ENCODE measurements at regions of chr2 and their contacts with region 1.

Region 1: DNA sequence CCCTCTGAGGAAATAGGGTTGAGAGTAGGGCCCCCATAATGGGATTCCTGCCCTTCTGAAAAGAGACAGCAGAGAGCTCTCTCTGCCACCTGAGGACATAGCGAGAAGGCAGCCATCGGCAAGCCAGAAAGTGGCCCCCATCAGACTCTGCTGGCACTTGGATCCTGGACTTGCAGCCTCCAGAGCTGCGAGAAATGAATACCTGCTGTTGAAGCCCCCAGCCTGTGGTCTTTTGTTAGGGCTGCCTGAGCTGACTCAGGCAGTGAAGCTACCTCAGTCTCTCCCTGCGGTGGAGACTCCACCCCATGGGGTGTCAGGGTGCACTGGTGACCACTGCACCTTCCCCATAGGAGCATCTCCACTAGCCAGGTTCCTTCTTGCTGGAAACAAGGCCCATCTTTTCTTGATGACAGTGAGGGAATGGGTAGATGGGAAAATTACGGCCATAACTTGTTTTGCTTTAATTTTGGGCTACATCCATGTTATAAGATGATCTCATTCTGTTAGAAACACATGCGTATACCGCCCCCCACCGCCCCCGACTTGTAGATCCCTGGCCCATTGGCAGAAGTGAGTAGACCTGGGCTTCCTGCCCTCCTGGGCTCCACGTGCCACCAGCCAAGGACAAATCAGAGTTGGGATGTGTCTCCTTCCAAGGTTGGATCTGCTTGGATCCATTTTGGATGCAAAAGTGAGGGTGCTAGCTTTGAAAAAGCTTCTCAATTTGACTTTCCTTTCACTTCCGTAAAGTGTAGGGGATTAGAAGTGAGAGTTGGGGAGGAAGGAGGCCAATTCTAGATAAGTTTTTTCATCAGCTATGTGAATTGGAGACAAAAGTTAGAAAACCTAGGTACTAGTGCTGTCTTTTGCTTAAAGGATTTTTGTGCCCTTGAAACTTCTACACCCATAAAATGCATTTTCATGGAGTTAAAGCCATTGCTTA is 42.9 kb downstream of the NCK2 start:
- DNase-seq: peak in 2 of 5 donors; percentile 66 to 83
- H3K4me3 ChIP-seq: peak overlapping the region; percentile 30
- H3K4me3 Mint-ChIP-seq: peak overlapping the region; percentile 7 to 88 (median 78)
- H3K27ac ChIP-seq: no peak overlapping the region
- H3K27ac Mint-ChIP-seq: peak overlapping the region; percentile 76 to 96 (median 94)
- H3K4me1 ChIP-seq: peaks cover 97% of the 10 kb centered on the region
- H3K4me1 Mint-ChIP-seq: peaks cover 97 to 98% (median 98%) of the 10 kb centered on the region in 3 donors
- H3K27me3 ChIP-seq: no peaks in the 10 kb centered on the region
- H3K27me3 Mint-ChIP-seq: peaks cover 0 to 4% of the 10 kb centered on the region in 2 donors

Region 2: GRCh38 chr2:105576440-105577252 is 211.0 kb before region 1 on chr2:
- CTCF ChIA-PET with region 1: interaction called, 22 read pairs
- POLR2A ChIA-PET with region 1: interaction called, 3 read pairs
- DNase-seq: peak in 2 of 5 donors; percentile 32 to 50
- H3K4me3 ChIP-seq: no peak overlapping the region
- H3K4me3 Mint-ChIP-seq: no peak overlapping the region
- H3K27ac ChIP-seq: no peak overlapping the region
- H3K27ac Mint-ChIP-seq: peak overlapping the region in 7 of 8 donors; percentile 1 to 88 (median 55)
- H3K4me1 ChIP-seq: peaks cover 6% of the 10 kb centered on the region
- H3K4me1 Mint-ChIP-seq: peaks cover 7 to 18% (median 13%) of the 10 kb centered on the region in 3 donors
- H3K27me3 ChIP-seq: no peaks in the 10 kb centered on the region
- H3K27me3 Mint-ChIP-seq: peaks cover 1 to 14% of the 10 kb centered on the region in 2 donors

Region 3: DNA sequence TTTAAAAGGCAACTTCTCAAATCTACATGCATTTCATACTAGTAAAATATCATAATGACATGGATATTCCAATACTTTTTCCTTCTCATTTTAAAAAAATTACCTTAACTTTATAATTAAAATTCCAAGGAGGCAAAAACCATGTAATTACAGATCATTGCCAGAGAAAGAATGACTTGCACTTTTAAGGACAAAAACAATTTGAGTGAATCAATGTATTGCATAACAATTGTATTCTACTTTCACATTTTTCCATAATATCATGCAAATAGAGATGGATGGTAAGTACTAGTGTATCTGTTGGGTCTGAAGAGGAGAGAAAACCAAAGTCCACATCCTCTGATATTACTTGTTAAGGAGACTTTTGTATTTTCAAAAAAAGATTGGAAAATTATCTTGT is 132.4 kb before region 1 on chr2:
- CTCF ChIA-PET with region 1: no interaction called
- POLR2A ChIA-PET with region 1: no interaction called
- DNase-seq: no peak
- H3K4me3 ChIP-seq: no peak overlapping the region
- H3K4me3 Mint-ChIP-seq: no peak overlapping the region
- H3K27ac ChIP-seq: no peak overlapping the region
- H3K27ac Mint-ChIP-seq: no peak overlapping the region
- H3K4me1 ChIP-seq: no peaks in the 10 kb centered on the region
- H3K4me1 Mint-ChIP-seq: no peaks in the 10 kb centered on the region
- H3K27me3 ChIP-seq: no peaks in the 10 kb centered on the region
- H3K27me3 Mint-ChIP-seq: peaks cover 9 to 14% of the 10 kb centered on the region in 2 donors

Region 4: DNA sequence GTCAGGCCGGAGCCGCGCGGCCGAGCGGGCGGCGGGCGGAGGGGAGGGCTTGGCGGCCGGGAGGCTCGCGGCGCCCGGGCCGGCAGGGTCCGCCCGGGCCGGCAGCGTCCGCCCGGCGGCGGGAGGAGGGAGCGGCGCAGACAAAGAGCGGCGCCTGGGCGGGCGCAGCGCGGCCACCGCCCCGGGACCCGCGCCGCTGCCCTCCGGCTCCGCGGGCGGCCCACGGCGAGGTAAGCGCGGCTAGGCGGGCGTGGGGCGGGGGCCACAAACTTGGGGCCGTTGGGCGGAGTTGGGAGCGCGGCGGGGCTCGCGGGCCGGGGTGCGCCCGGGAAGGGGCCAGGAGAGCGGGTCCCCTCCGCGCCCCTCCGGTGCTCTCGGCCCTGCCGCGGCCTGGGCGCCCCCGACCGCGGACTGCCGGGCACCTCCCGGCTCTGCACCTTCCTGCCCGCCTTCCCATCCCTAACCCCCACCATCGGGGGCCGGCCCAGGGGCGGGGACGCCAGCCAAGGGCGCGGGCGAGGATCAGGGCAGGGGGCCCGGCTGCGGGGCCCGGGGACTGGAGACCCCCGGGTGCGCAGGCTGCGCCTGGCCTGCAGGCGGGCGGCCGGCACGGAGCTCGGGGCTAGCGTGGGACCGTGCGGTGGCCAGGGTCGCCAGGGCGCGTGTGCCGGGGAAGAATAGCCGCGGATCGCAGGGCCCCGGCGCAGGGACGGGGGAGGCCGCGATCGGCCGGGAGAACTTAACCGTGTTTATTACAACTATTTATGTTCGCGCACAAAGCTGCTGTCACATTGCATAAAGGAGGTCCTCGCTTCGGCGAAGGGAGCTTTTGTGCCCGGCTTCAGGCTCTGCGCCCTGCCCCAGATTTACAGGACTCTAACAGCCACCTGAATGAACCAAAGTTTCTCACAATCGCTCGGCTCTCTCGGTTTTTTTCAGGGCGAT is 42.5 kb before region 1 on chr2 and contains the start of gene NCK2:
- CTCF ChIA-PET with region 1: interaction called, 29 read pairs
- POLR2A ChIA-PET with region 1: interaction called, 4 read pairs
- DNase-seq: peak in 4 of 5 donors; percentile 17 to 52 (median 32)
- H3K4me3 ChIP-seq: peak within 1 kb of the TSS; percentile 90
- H3K4me3 Mint-ChIP-seq: peak within 1 kb of the TSS; percentile 88 to 99 (median 97)
- H3K27ac ChIP-seq: peak within 1 kb of the TSS; percentile 81
- H3K27ac Mint-ChIP-seq: peak within 1 kb of the TSS; percentile 92 to 100 (median 97)
- H3K4me1 ChIP-seq: peaks cover 73% of the 10 kb centered on the region
- H3K4me1 Mint-ChIP-seq: peaks cover 78 to 81% (median 80%) of the 10 kb centered on the region in 3 donors
- H3K27me3 ChIP-seq: no peaks in the 10 kb centered on the region
- H3K27me3 Mint-ChIP-seq: peaks cover 0 to 2% of the 10 kb centered on the region in 2 donors
- total RNA-seq, gene NCK2: 72.4 to 76.1 TPM

Region 5: GRCh38 chr2:105775809-105776559 is 11.7 kb before region 1 on chr2:
- CTCF ChIA-PET with region 1: interaction called, 21 read pairs
- POLR2A ChIA-PET with region 1: interaction called, 6 read pairs
- DNase-seq: peak in 4 of 5 donors; percentile 44 to 63 (median 53)
- H3K4me3 ChIP-seq: peak overlapping the region; percentile 52
- H3K4me3 Mint-ChIP-seq: peak overlapping the region; percentile 76 to 89 (median 82)
- H3K27ac ChIP-seq: peak overlapping the region; percentile 58
- H3K27ac Mint-ChIP-seq: peak overlapping the region; percentile 87 to 100 (median 94)
- H3K4me1 ChIP-seq: peaks cover 97% of the 10 kb centered on the region
- H3K4me1 Mint-ChIP-seq: peaks cover 88 to 96% (median 91%) of the 10 kb centered on the region in 3 donors
- H3K27me3 ChIP-seq: no peaks in the 10 kb centered on the region
- H3K27me3 Mint-ChIP-seq: no peaks in the 10 kb centered on the region

Region 6: GRCh38 chr2:105828558-105828957 is 40.9 kb after region 1 on chr2:
- CTCF ChIA-PET with region 1: no interaction called
- POLR2A ChIA-PET with region 1: no interaction called
- DNase-seq: no peak
- H3K4me3 ChIP-seq: no peak overlapping the region
- H3K4me3 Mint-ChIP-seq: peak overlapping the region in 4 of 7 donors; percentile 3 to 41 (median 16)
- H3K27ac ChIP-seq: no peak overlapping the region
- H3K27ac Mint-ChIP-seq: peak overlapping the region; percentile 51 to 96 (median 81)
- H3K4me1 ChIP-seq: peaks cover 41% of the 10 kb centered on the region
- H3K4me1 Mint-ChIP-seq: peaks cover 86 to 98% (median 92%) of the 10 kb centered on the region in 3 donors
- H3K27me3 ChIP-seq: no peaks in the 10 kb centered on the region
- H3K27me3 Mint-ChIP-seq: no peaks in the 10 kb centered on the region

Region 7: DNA sequence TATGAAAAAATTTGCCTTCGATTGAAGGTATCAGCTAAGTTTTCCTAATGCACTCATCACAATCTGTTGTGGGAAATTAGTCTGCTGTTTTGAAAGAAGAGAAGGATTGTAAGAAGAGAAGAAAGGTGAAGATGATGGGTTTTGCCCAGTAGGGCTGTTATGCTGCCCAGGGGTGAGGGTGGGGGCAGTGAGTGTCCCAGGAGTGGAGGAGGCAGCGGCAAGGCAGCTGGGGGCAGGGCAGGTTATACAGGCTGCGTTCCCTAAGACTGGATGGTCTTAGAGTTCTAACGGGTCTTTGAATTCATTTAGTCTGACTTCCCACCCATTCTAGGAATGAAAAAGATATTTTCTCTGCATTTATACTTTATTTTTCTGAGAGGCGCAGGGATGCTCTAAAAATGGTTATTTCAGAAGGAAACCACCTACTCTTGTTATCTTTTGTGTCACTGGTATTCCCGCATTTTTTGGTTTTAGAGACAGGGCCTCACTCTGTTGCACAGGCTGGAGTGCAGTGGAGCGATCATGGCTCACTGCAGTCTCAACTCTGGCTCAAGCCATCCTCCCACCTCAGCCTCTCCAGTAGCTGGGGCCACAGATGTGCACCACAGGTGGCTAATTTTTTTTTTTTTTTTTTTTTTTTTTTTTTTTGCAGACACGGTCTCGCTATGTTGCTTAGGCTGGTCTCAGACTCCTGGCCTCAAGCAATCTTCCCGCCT is 92.8 kb after region 1 on chr2:
- CTCF ChIA-PET with region 1: no interaction called
- POLR2A ChIA-PET with region 1: interaction called, 12 read pairs
- DNase-seq: no peak
- H3K4me3 ChIP-seq: no peak overlapping the region
- H3K4me3 Mint-ChIP-seq: peak overlapping the region in 1 of 7 donors; percentile 23
- H3K27ac ChIP-seq: no peak overlapping the region
- H3K27ac Mint-ChIP-seq: peak overlapping the region; percentile 4 to 97 (median 54)
- H3K4me1 ChIP-seq: peaks cover 84% of the 10 kb centered on the region
- H3K4me1 Mint-ChIP-seq: peaks cover 67 to 88% (median 87%) of the 10 kb centered on the region in 3 donors
- H3K27me3 ChIP-seq: no peaks in the 10 kb centered on the region
- H3K27me3 Mint-ChIP-seq: no peaks in the 10 kb centered on the region

Measured in CD8-positive, alpha-beta memory T cell (primary cell).